ENCODE measurements at regions of chr2 and their contacts with region 1.

Region 1: DNA sequence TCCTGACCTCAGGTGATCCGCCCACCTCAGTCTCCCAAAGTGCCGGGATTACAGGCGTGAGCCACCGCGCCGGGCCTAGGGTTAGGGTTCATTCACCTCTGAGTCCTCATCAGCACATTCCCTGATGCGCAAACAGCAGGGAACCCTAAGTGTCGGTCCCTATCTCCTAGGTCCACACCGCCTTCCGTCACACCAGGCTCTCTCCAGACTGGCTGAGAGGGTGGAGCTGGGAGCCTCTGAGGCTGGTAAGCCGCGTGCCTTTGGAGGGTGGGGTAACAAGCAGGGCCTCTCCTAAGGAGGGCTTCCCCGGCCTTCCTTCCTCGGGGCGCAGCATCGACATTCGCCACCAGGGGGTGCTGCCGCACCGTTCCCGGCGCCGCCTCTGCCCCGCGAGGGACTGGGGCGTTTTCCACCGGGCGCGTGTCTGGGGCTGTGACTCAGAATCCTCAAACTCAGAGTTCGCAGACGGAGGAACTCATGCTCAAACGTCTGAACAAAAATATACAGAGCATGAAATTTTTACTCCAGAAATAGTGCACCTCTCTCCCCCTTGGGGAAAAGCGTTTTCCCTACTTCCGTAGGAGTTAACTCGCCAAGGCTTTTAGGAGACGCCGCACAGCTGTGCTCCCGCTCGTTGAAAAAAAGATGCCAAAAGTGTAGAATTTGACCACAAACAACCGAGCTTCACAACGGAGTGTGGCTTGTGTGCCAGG is 63.9 kb upstream of the ASAP2 start:
- DNase-seq: peak; percentile 90
- ATAC-seq: peak; percentile 88 to 89

Region 2: GRCh38 chr2:8872821-8873432 is 269.8 kb before region 1 on chr2:
- intact Hi-C with region 1: loop called in 1 of 2 experiments (anchors 5 kb)
- DNase-seq: no peak
- ATAC-seq: no peak

Region 3: DNA sequence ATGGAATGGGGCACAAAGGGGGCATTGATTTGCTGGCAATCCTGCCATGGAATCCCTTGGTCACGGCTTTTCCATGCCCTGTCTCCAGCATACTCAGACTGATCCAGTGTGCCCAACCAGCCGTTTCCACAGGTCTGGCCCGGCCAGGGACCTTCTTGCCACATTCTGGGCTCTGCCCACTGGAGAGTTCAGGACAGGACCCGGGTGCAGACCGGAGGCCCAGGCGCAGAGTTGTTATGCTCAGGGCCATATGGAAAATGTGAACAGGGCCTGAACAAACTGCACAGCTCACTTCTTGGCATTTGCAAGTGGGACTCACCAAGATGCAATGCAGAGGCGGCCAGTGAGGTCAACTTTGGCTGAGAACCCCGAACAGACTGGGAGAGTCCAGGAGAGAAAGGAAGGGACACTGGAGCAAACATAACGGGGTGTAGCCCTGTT is 48.4 kb after region 1 on chr2:
- intact Hi-C with region 1: loop called in 1 of 2 experiments (anchors 5 kb)
- DNase-seq: peak; percentile 94
- ATAC-seq: peak; percentile 92 to 93

Region 4: DNA sequence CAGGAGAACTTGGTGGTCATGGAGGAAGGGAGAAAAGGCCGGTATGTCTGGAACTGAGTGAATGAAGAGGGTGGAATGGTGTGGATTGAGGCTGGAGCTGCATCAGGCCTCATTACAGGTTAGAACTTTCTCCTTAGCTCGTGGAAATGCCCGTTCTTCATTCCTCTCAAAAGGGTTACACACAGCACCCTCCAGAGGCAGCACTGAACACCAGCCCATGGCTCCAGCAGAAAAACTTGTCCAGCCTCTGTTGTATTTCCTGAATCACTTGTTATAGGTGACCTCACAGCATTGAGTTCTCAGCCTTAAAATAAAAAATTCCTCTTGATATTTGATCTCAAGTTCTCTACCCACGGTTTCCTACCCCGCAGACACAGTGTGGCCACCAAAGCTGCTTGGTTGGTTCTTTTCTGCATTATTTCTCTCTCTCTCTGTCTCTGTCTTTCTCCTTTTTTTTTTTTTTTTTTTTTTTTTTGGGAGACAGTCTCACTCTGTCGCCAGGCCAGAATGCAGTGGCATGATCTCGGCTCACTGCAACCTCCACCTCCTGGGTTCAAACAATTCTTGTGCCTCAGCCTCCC is 191.0 kb after region 1 on chr2:
- intact Hi-C with region 1: loop called in 1 of 2 experiments (anchors 5 kb)
- DNase-seq: peak; percentile 47
- ATAC-seq: peak; percentile 73 to 74

Region 5: GRCh38 chr2:9378433-9379390 is 236.0 kb after region 1 on chr2:
- intact Hi-C with region 1: loop called in 1 of 2 experiments (anchors 10 kb)
- DNase-seq: peak; percentile 85
- ATAC-seq: peak; percentile 81 to 84

Region 6: GRCh38 chr2:9388950-9389911 is 246.5 kb after region 1 on chr2:
- intact Hi-C with region 1: no loop called
- DNase-seq: no peak
- ATAC-seq: no peak

Region 7: DNA sequence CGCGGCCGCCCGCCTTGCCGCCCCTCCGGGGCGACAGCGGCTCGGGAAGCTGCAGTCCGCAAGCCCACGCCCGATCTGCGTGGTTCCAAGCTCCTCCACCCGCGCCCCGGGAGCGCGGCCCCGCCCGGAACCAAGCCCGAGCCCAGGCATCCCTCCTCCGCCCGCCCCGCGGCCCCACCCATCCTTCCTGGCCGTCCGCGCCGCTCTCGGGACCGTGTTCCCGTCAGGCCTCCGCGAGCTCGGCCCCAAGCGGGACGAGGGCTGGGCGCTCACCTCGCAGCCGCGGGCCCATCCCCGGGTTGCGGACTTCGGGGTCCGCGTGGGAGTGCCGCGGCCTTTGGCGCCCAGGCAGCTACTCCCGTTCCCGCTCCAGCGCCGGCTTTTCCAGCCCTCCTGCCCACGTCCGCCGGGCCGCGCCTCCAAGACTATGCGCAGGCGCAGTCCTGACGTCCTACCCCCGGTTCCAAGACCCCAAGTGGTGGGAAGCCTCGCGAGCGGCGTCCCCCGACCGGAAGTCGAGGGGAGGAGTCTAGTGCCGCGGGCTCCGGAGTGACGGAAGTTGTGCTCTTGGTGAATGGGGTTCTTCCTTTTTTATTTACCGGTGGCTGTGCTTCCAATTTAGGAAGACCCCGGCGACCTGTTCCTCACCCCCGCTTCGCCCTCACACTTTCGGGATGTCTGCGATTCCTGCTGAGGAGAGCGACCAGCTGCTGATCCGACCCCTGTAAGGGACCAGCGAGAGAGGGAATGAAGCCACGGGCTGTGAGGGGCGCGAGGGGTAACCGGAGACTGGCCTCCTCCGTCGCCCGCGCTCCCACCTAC is 280.6 kb after region 1 on chr2 and contains the starts of genes CPSF3 and ITGB1BP1:
- intact Hi-C with region 1: loop called in 1 of 2 experiments (anchors 5 kb)
- DNase-seq: peak; percentile 98
- ATAC-seq: peak; percentile 96 to 97
- total RNA-seq, gene CPSF3: 13.8 to 21.3 TPM
- total RNA-seq, gene ITGB1BP1: 107 to 161 TPM

Region 8: DNA sequence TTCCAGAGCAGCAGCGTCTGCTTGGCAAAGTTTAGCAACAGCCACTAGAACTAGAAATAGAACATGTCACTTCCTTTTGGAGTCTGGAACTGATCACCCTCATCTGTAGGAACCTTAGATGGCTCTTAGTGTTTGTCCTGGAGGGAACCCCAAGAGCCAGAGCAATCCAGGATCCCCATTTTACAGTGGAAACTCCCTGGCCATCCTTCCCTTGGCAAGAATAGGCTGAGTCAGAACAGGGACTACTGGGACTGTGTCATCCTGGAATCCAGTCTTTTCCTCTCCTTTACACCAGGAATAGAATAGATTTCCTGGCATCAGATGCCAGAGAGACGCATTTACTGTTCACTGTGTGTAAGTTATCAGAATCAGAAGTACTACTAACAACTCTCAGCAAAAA is 775.6 kb after region 1 on chr2:
- intact Hi-C with region 1: no loop called
- DNase-seq: no peak
- ATAC-seq: peak; percentile 59 to 66

Measured in left cardiac atrium (tissue), 4 donors.